ENCODE measurements at regions of chr3 and their contacts with region 1.

Region 1: GRCh38 chr3:49351521-49352011 is 6.6 kb downstream of the GPX1 start:
- DNase-seq: no peak
- H3K4me3 ChIP-seq: no peak overlapping the region
- H3K4me3 Mint-ChIP-seq: peak overlapping the region in 1 of 7 donors; percentile 44
- H3K27ac ChIP-seq: no peak overlapping the region
- H3K27ac Mint-ChIP-seq: peak overlapping the region in 3 of 8 donors; percentile 51 to 78 (median 61)
- H3K4me1 ChIP-seq: peaks cover 6% of the 10 kb centered on the region
- H3K4me1 Mint-ChIP-seq: peaks cover 6 to 14% (median 11%) of the 10 kb centered on the region in 3 donors
- H3K27me3 ChIP-seq: no peaks in the 10 kb centered on the region
- H3K27me3 Mint-ChIP-seq: peaks cover 0 to 1% of the 10 kb centered on the region in 2 donors

Region 2: DNA sequence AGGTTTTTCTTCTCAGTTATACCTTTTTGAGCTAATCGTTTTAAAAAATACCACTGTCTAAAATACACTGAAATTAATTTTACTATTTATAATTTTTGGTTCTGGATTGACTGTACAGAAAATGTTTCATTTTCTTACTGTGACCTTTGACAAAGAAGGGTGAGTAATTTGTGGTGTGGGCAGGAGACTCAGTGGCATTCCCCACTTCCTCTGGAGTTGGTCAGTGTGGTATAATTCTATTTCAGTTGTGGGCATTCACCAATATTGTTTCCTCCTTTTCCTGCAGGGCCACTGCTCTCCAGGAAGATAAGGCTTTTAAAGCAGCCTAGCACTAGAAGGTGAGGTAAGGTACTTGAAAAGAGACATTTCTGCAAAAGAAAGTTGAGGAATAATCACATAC is 125.0 kb after region 1 on chr3:
- CTCF ChIA-PET with region 1: no interaction called
- POLR2A ChIA-PET with region 1: interaction called, 12 read pairs
- DNase-seq: no peak
- H3K4me3 ChIP-seq: no peak overlapping the region
- H3K4me3 Mint-ChIP-seq: peak overlapping the region in 1 of 7 donors; percentile 70
- H3K27ac ChIP-seq: no peak overlapping the region
- H3K27ac Mint-ChIP-seq: peak overlapping the region in 2 of 8 donors; percentile 18 to 35
- H3K4me1 ChIP-seq: peaks cover 15% of the 10 kb centered on the region
- H3K4me1 Mint-ChIP-seq: peaks cover 15 to 28% (median 19%) of the 10 kb centered on the region in 3 donors
- H3K27me3 ChIP-seq: no peaks in the 10 kb centered on the region
- H3K27me3 Mint-ChIP-seq: no peaks in the 10 kb centered on the region